ENCODE measurements at regions of chr1 and their contacts with region 1.

Region 1: DNA sequence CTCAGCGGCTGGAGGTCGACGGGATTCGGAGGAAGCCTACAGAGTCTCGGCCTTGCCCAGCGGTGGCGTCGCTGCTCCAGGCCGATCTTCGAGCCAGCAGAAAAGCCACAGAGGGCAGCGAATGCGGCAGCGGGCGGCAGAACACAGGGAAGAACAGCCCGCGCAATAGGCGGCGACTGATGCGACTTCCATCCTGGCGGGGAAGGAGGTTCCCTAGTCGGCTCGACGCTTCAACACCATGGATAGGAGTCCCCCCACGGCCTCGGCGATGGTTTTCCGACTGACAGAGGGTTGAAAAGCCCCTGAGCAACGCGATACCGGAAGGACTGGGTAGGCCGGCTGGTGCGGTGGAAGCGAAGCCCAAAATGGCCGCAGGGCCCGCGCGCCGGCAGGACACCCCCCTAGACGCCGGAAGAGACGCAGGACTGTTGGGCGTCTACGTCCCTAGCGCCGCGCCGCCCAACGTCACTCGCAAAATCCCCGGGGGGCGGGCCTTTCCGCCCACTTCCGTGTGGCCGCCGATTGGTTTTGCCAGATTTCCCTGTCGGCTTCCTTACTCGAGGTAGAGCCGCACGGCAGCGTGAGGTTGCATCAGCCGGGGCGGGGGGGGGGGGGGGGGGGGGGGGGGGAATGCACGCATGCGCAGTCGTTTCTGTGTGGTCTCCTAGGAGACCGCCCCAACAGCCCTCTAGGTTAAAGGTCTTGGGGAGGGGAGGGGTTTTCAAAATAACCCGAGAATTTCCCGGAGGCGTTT is at the start of gene PPP1R15B:
- DNase-seq: peak; percentile 100
- H3K4me3 Mint-ChIP-seq: peak within 1 kb of the TSS; percentile 100
- H3K27ac Mint-ChIP-seq: peak within 1 kb of the TSS; percentile 100
- H3K4me1 Mint-ChIP-seq: peaks cover 18% of the 10 kb centered on the region
- H3K27me3 Mint-ChIP-seq: no peaks in the 10 kb centered on the region
- CTCF ChIP-seq: no peak
- total RNA-seq, gene PPP1R15B: 86.0 and 94.8 TPM in 2 replicates

Region 2: GRCh38 chr1:203861379-203862184 is 550.0 kb before region 1 on chr1 and contains the start of gene SNRPE:
- CTCF ChIA-PET with region 1: interaction called, 4 read pairs
- POLR2A ChIA-PET with region 1: interaction called, 10 read pairs
- intact Hi-C with region 1: no loop called
- DNase-seq: peak; percentile 100
- H3K4me3 Mint-ChIP-seq: peak within 1 kb of the TSS; percentile 100
- H3K27ac Mint-ChIP-seq: peak within 1 kb of the TSS; percentile 100
- H3K4me1 Mint-ChIP-seq: peaks cover 43% of the 10 kb centered on the region
- H3K27me3 Mint-ChIP-seq: no peaks in the 10 kb centered on the region
- CTCF ChIP-seq: peak; percentile 100
- total RNA-seq, gene SNRPE: 358 and 423 TPM in 2 replicates

Region 3: GRCh38 chr1:204426029-204426436 is 14.4 kb after region 1 on chr1:
- CTCF ChIA-PET with region 1: interaction called, 132 read pairs
- POLR2A ChIA-PET with region 1: interaction called, 150 read pairs
- intact Hi-C with region 1: no loop called
- DNase-seq: peak; percentile 86
- H3K4me3 Mint-ChIP-seq: no peak overlapping the region
- H3K27ac Mint-ChIP-seq: peak overlapping the region; percentile 1
- H3K4me1 Mint-ChIP-seq: peaks cover 19% of the 10 kb centered on the region
- H3K27me3 Mint-ChIP-seq: no peaks in the 10 kb centered on the region
- CTCF ChIP-seq: no peak

Region 4: DNA sequence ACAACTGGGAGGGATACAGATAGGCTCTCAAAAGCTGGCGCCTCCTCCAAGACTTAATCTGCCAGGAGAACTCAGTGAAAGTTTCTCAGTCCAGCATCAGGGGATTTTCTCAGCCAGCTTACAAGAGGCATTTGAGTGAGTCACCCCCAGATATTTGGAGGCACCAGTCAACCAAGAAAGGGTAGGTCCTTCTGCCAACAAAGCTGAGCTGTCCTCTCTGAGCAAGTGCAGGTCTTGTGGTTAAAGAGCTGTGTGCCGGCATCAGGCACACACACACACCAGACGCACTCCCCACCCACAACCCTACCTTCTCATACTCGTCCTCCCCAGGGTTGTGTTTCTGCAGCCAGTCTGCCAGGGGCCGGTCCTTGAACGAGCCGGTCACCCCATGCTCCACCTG is 27.0 kb after region 1 on chr1:
- CTCF ChIA-PET with region 1: interaction called, 132 read pairs
- POLR2A ChIA-PET with region 1: interaction called, 111 read pairs
- intact Hi-C with region 1: no loop called
- DNase-seq: peak; percentile 99
- H3K4me3 Mint-ChIP-seq: peak overlapping the region; percentile 6
- H3K27ac Mint-ChIP-seq: peak overlapping the region; percentile 94
- H3K4me1 Mint-ChIP-seq: peaks cover 65% of the 10 kb centered on the region
- H3K27me3 Mint-ChIP-seq: no peaks in the 10 kb centered on the region
- CTCF ChIP-seq: no peak

Region 5: GRCh38 chr1:204516180-204516879 is 104.7 kb after region 1 on chr1 and contains the start of gene MDM4:
- CTCF ChIA-PET with region 1: interaction called, 4 read pairs
- POLR2A ChIA-PET with region 1: interaction called, 33 read pairs
- intact Hi-C with region 1: no loop called
- DNase-seq: peak; percentile 100
- H3K4me3 Mint-ChIP-seq: no peak within 1 kb of the TSS
- H3K27ac Mint-ChIP-seq: no peak within 1 kb of the TSS
- H3K4me1 Mint-ChIP-seq: peaks cover 12% of the 10 kb centered on the region
- H3K27me3 Mint-ChIP-seq: no peaks in the 10 kb centered on the region
- CTCF ChIP-seq: no peak
- total RNA-seq, gene MDM4: 162 and 174 TPM in 2 replicates

Measured in MCF 10A (cell line).